Activated CD8-positive, alpha-beta T cell treated with anti-CD3 and anti-CD28 coated beads, Interleukin-2, amount 10 ng/mL, durations not matched to agents 7 days and 5 days (primary cell): ENCODE measurements at regions of chr7 and their contacts with region 1.

Region 1: GRCh38 chr7:74026903-74027551 is 946 bp upstream of the ELN start:
- DNase-seq: peak; percentile 73
- ATAC-seq: peak; percentile 73
- H3K4me3 Mint-ChIP-seq: no peak overlapping the region
- H3K27ac Mint-ChIP-seq: no peak overlapping the region
- H3K4me1 Mint-ChIP-seq: no peaks in the 10 kb centered on the region
- H3K27me3 Mint-ChIP-seq: peaks cover 45% of the 10 kb centered on the region

Region 2: GRCh38 chr7:73703757-73704639 is 323.0 kb before region 1 on chr7:
- CTCF ChIA-PET with region 1: no interaction called
- POLR2A ChIA-PET with region 1: no interaction called
- DNase-seq: peak; percentile 43
- ATAC-seq: peak; percentile 62
- H3K4me3 Mint-ChIP-seq: no peak overlapping the region
- H3K27ac Mint-ChIP-seq: no peak overlapping the region
- H3K4me1 Mint-ChIP-seq: peaks cover 2% of the 10 kb centered on the region
- H3K27me3 Mint-ChIP-seq: no peaks in the 10 kb centered on the region

Region 3: GRCh38 chr7:73822319-73823076 is 204.5 kb before region 1 on chr7:
- CTCF ChIA-PET with region 1: no interaction called
- POLR2A ChIA-PET with region 1: no interaction called
- DNase-seq: no peak
- ATAC-seq: no peak
- H3K4me3 Mint-ChIP-seq: no peak overlapping the region
- H3K27ac Mint-ChIP-seq: no peak overlapping the region
- H3K4me1 Mint-ChIP-seq: peaks cover 10% of the 10 kb centered on the region
- H3K27me3 Mint-ChIP-seq: peaks cover 17% of the 10 kb centered on the region

Region 4: DNA sequence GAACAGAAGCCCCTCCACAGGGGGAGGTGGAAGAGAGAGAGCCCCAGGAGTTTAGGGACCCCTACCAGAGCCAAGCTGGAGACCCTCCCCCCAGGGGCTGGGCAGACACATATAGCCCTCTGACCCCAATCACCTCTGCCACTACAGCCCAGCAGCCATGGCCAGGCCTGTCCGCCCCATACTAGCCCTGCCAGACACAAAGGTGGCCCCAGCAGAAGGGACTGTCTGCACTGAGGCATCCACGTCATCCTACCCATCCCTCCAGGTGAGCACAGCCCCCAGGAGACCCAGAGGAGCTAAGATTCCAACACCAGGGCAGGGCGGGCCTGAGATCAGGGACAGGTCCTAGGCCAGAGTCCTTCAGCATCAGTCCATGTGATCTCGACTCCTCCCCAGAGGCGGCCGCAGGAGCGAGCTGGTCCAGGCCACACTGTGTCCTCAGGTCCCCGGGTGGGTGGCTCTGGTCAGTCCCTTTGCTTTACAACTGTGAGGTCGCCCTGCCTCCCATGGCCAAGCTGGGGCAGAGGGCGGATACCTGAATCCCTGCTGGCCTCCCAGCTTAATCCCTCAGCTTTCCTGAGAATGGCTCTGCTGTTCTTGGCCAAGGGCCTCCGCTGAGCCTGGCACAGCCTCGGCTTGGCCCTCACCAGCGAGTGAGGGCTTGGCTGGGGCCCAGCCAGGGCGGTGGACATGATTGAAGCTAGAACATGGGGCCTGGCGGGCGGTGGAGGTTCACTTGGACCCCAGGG is 13.3 kb before region 1 on chr7:
- CTCF ChIA-PET with region 1: interaction called, 14 read pairs
- POLR2A ChIA-PET with region 1: no interaction called
- DNase-seq: no peak
- ATAC-seq: no peak
- H3K4me3 Mint-ChIP-seq: no peak overlapping the region
- H3K27ac Mint-ChIP-seq: no peak overlapping the region
- H3K4me1 Mint-ChIP-seq: peaks cover 5% of the 10 kb centered on the region
- H3K27me3 Mint-ChIP-seq: no peaks in the 10 kb centered on the region

Region 5: DNA sequence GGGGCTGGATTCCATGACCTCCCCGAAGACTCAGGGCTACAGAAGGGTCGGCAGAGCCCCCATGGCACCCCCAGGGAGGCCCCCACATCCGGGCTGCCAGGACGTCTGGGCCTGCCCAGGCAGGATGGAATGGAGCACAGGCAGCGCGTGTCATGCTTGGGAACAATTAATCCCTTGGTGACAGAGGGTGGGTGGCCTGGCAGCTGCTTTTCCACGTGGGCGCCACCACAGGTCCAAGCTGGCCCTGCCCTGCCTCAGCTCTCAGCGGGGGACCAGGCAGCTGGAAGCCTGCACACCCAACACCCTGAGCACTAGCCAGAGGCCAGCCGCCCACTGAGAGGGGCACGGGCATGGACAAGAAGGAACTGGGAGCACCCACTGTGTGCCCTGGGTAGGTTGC is 12.3 kb after region 1 on chr7:
- CTCF ChIA-PET with region 1: interaction called, 21 read pairs
- POLR2A ChIA-PET with region 1: no interaction called
- DNase-seq: no peak
- ATAC-seq: no peak
- H3K4me3 Mint-ChIP-seq: no peak overlapping the region
- H3K27ac Mint-ChIP-seq: no peak overlapping the region
- H3K4me1 Mint-ChIP-seq: peaks cover 2% of the 10 kb centered on the region
- H3K27me3 Mint-ChIP-seq: no peaks in the 10 kb centered on the region

Region 6: GRCh38 chr7:74226633-74227032 is 199.6 kb after region 1 on chr7:
- CTCF ChIA-PET with region 1: no interaction called
- POLR2A ChIA-PET with region 1: no interaction called
- DNase-seq: no peak
- ATAC-seq: no peak
- H3K4me3 Mint-ChIP-seq: no peak overlapping the region
- H3K27ac Mint-ChIP-seq: peak overlapping the region; percentile 63
- H3K4me1 Mint-ChIP-seq: peaks cover 24% of the 10 kb centered on the region
- H3K27me3 Mint-ChIP-seq: no peaks in the 10 kb centered on the region